Endothelial cell of umbilical vein (primary cell): ENCODE measurements at regions of chr17 and their contacts with region 1.

Region 1: GRCh38 chr17:48307814-48308411 is 122.1 kb downstream of the SKAP1 start:
- DNase-seq: peak; percentile 59
- H3K4me3 ChIP-seq: no peak overlapping the region
- H3K27ac ChIP-seq: no peak overlapping the region
- H3K4me1 ChIP-seq: no peaks in the 10 kb centered on the region
- H3K27me3 ChIP-seq: no peaks in the 10 kb centered on the region
- CTCF ChIP-seq: peak; percentile 79 to 84
- POLR2A ChIP-seq: no peak

Region 2: DNA sequence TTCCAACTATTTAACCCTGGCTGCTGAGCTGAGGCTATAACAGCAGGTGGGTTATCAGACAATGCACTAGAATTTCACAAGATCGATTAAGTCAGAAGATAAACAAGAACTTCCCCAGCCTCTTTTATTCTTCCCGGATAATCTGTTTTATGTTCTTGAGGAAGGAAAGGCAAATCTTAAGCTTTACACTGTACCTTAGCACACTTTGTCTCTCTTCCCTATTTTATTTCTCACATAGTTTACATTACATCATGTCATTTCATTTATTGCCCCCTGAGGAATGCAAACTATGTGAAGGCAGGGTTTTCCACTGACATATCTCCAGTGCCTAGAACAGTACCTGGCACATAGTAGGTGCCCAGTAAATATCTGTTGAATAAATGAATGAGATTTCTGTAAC is 17.5 kb before region 1 on chr17:
- CTCF ChIA-PET with region 1: interaction called, 21 read pairs
- POLR2A ChIA-PET with region 1: no interaction called
- dilution Hi-C with region 1: no loop called
- intact Hi-C with region 1: no loop called
- DNase-seq: no peak
- H3K4me3 ChIP-seq: no peak overlapping the region
- H3K27ac ChIP-seq: no peak overlapping the region
- H3K4me1 ChIP-seq: peaks cover 14% of the 10 kb centered on the region
- H3K27me3 ChIP-seq: no peaks in the 10 kb centered on the region
- CTCF ChIP-seq: no peak
- POLR2A ChIP-seq: no peak

Region 3: DNA sequence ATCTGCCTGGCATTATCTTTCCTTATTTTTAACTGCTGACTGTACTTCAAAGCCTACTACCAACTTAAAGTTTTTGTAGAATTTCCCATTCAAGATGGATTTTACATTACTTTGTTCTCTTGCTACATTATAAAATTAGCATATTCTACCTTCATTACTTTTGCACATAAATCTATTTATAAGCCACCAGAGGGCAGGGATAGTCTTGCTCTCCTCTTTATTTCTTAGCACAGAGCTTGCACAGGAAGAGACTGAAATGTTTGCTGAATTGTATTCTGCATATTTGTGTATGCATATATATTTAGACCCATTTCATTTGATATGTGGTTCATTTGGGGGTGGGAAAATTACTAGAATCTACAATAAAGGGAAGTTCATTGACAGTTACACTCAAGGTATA is 14.1 kb after region 1 on chr17:
- CTCF ChIA-PET with region 1: interaction called, 31 read pairs
- POLR2A ChIA-PET with region 1: no interaction called
- dilution Hi-C with region 1: no loop called
- intact Hi-C with region 1: no loop called
- DNase-seq: no peak
- H3K4me3 ChIP-seq: no peak overlapping the region
- H3K27ac ChIP-seq: no peak overlapping the region
- H3K4me1 ChIP-seq: no peaks in the 10 kb centered on the region
- H3K27me3 ChIP-seq: no peaks in the 10 kb centered on the region
- CTCF ChIP-seq: peak in 1 of 2 donors; percentile 8
- POLR2A ChIP-seq: no peak

Region 4: GRCh38 chr17:48335858-48336500 is 28.1 kb after region 1 on chr17:
- CTCF ChIA-PET with region 1: interaction called, 18 read pairs
- POLR2A ChIA-PET with region 1: no interaction called
- dilution Hi-C with region 1: no loop called
- intact Hi-C with region 1: no loop called
- DNase-seq: peak; percentile 87
- H3K4me3 ChIP-seq: no peak overlapping the region
- H3K27ac ChIP-seq: no peak overlapping the region
- H3K4me1 ChIP-seq: no peaks in the 10 kb centered on the region
- H3K27me3 ChIP-seq: peaks cover 0 to 3% of the 10 kb centered on the region in 2 experiments
- CTCF ChIP-seq: peak; percentile 47 to 55
- POLR2A ChIP-seq: no peak

Region 5: DNA sequence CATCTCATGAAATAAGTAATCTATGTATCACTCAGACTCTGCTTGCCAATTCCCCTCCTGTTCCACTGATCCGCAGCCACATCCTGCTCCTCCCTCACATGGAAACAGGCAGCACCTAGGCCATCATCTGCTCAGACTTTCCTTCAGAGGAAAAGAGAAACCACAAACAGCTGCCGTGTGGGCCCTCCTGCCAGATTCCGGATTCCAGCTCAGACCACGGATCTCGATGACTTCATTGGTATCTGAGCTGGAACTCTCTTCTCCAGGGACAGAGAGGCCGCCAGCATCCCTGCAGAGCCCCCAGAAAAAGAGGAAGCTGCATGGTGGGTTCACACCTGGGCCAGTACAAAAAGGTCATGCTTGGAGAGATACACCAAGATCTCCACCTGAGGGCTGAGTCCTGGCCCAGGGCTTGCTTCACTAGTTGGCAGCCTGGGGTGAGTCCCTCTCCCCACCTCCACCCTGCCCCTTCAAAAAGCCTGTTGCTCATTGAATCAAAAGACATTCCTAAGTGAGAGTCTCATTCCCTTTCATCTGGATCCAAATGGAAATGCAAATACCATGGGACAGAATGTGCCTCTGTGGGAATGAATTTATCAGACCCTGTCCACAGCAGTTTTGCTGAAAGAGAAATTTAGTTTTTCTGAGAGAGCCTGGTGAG is 175.7 kb after region 1 on chr17:
- CTCF ChIA-PET with region 1: no interaction called
- POLR2A ChIA-PET with region 1: no interaction called
- dilution Hi-C with region 1: no loop called
- intact Hi-C with region 1: no loop called
- DNase-seq: no peak
- H3K4me3 ChIP-seq: no peak overlapping the region
- H3K27ac ChIP-seq: no peak overlapping the region
- H3K4me1 ChIP-seq: peaks cover 2% of the 10 kb centered on the region
- H3K27me3 ChIP-seq: peaks cover 6 to 22% of the 10 kb centered on the region in 2 experiments
- CTCF ChIP-seq: no peak
- POLR2A ChIP-seq: no peak

Region 6: DNA sequence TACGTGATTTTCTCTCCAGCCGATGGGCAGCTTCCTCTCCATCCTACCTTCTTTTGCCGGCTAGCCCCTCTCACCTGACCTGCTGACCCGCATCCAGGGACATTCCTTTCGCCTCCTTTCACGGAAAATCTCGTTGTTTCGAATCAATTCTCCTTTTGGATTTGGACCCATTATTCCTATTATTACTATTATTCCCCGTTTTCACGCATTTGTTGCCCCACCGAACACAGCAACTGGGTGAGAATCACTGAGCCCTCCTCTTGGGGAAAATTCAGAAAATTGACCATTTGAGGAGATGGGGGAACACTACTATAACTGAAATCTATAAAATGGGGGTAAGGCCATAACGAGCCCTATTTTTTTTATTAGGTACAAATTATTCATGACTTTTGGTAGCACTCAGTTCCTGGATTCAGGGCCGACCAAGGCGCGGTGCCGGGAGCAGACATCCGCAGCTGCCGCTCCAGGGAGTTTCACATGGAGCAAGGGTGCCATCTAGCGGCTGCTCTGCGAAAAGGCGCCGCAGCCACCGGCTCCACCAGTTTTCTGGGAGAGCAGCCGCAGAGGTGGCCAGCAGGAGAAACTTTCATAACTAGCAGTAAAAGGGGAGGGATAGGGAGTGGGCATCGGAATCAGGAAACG is 310.5 kb after region 1 on chr17:
- CTCF ChIA-PET with region 1: interaction called, 10 read pairs
- POLR2A ChIA-PET with region 1: no interaction called
- dilution Hi-C with region 1: no loop called
- intact Hi-C with region 1: loop called (anchors 1 kb)
- DNase-seq: peak; percentile 83
- H3K4me3 ChIP-seq: peak overlapping the region; percentile 3 to 46 (median 30)
- H3K27ac ChIP-seq: no peak overlapping the region
- H3K4me1 ChIP-seq: peaks cover 27% of the 10 kb centered on the region
- H3K27me3 ChIP-seq: peaks cover 66 to 79% of the 10 kb centered on the region in 2 experiments
- CTCF ChIP-seq: peak; percentile 91 to 99
- POLR2A ChIP-seq: no peak